ENCODE measurements at regions of chr5 and their contacts with region 1.

Region 1: GRCh38 chr5:137292461-137293027 is 206.6 kb downstream of the SPOCK1 start:
- DNase-seq: no peak
- ATAC-seq: no peak
- H3K4me3 ChIP-seq: no peak overlapping the region
- H3K27ac ChIP-seq: no peak overlapping the region
- H3K4me1 ChIP-seq: no peaks in the 10 kb centered on the region
- H3K27me3 ChIP-seq: peaks cover 0 to 6% of the 10 kb centered on the region in 2 experiments; a peak in 1 of 4 replicates
- CTCF ChIP-seq: no peak
- EP300 ChIP-seq: no peak
- POLR2A ChIP-seq: no peak
- RAD21 ChIP-seq: no peak

Region 2: DNA sequence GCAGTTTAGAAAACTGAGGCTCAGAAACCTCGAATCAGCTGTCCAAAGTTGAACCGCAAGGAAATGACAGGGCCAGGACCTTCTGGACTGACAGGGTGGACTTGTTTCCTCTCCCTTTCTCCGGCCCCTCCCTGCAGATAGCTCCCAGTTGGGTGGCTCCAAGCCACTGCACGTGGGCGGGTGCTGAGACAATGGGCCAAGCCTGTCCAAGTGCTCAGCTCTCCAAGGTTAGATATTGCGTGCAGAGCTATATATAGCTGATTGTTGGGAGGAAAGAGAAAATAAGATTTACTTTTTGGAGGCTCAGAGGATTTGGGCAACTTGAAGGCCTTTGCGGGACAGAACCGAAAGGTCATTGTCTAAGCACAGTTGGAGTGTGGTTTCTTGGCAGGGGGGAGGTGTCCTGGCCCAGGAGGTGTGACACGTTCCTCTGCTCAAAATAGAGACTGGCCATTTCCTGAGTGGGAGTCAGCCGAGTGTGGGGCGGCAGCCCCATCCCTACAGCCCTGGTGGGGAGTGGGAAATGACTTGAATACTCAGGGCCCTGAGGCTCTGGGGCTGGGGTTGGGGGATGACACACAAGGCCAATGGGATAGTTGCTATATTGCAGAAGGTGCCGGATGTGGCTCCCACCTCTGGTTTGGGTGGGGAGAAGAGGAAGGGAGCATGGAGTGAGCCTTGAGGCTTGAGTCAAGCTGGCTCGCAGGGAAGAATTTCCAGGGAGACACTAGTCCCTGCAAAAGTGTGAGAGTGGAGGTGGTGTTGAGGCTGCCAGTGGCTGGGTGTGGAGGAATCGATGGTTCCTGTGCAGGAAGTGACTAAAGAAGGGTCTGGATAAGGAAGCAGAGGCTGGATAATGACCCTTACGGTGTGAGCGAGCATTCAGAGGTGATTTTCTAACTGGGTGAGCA is 1204.3 kb before region 1 on chr5:
- CTCF ChIA-PET with region 1: no interaction called
- POLR2A ChIA-PET with region 1: no interaction called
- RAD21 ChIA-PET with region 1: no interaction called
- SMC1A ChIA-PET with region 1: no interaction called
- in situ Hi-C with region 1: no loop called
- intact Hi-C with region 1: no loop called
- DNase-seq: no peak
- ATAC-seq: peak; percentile 49
- H3K4me3 ChIP-seq: no peak overlapping the region
- H3K27ac ChIP-seq: no peak overlapping the region
- H3K4me1 ChIP-seq: no peaks in the 10 kb centered on the region
- H3K27me3 ChIP-seq: no peaks in the 10 kb centered on the region; a peak in 1 of 4 replicates
- CTCF ChIP-seq: no peak
- EP300 ChIP-seq: no peak
- POLR2A ChIP-seq: no peak
- RAD21 ChIP-seq: no peak

Region 3: DNA sequence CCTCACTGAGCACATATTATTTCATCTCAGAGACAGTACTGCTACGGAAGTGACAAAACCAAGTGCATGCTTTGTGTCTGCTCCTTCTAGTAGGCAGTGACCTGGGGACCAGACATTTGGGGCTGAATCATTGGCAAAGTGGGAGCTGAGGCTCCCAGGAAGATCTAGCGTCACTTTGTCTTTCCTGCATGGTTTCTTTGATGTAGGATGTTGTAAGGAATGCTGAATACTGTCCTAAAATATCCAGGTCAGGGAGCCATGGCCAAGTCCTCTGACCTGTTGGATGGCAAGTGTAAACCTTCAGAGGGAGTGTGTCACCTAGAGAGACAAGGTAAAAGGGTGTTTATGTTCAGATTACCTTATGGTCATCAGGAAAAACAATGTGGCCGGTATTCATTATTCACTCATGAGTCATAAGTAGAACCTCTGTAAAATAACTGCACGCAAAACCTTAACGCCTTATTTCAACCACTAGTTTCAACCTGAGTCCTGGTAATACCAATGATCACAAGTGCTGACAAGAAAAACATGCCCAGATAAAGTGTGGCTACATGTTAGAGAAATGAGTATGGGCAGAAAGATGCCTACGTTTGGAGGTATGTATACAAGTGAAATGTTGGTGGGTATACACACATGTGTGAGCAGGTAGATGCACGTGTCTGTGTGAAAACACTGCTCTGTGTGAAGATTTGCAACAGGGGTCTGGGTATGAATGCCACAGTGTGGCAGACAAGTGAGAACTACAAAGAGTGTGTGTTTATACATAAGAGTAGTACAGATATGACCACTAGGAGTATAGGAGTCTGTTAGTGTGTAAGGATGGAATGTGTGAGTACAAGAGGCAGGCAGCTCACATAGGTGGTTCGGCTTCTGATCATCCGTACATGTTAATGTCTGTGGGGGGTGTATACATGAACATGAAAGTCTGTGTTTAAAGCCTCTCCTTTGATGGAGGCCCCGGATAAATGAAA is 57.3 kb before region 1 on chr5:
- CTCF ChIA-PET with region 1: no interaction called
- POLR2A ChIA-PET with region 1: interaction called, 11 read pairs
- RAD21 ChIA-PET with region 1: no interaction called
- SMC1A ChIA-PET with region 1: no interaction called
- in situ Hi-C with region 1: no loop called
- intact Hi-C with region 1: no loop called
- DNase-seq: no peak
- ATAC-seq: peak; percentile 84
- H3K4me3 ChIP-seq: no peak overlapping the region
- H3K27ac ChIP-seq: no peak overlapping the region
- H3K4me1 ChIP-seq: no peaks in the 10 kb centered on the region
- H3K27me3 ChIP-seq: no peaks in the 10 kb centered on the region
- CTCF ChIP-seq: no peak
- EP300 ChIP-seq: peak in 1 of 2 experiments; percentile 42; a peak in 1 of 4 replicates
- POLR2A ChIP-seq: no peak
- RAD21 ChIP-seq: no peak